K562 (cell line): ENCODE measurements at regions of chr11 and their contacts with region 1.

Region 1: GRCh38 chr11:33052231-33052630 is 12.9 kb downstream of the TCP11L1 start:
- DNase-seq: no peak
- ATAC-seq: no peak
- H3K4me3 ChIP-seq: no peak overlapping the region
- H3K27ac ChIP-seq: no peak overlapping the region
- H3K4me1 ChIP-seq: no peaks in the 10 kb centered on the region
- H3K27me3 ChIP-seq: no peaks in the 10 kb centered on the region
- CTCF ChIP-seq: no peak
- EP300 ChIP-seq: no peak
- POLR2A ChIP-seq: no peak
- RAD21 ChIP-seq: no peak

Region 2: GRCh38 chr11:33039274-33040032 is 12.8 kb before region 1 on chr11 and contains the start of gene TCP11L1:
- CTCF ChIA-PET with region 1: no interaction called
- POLR2A ChIA-PET with region 1: interaction called, 12 read pairs
- in situ Hi-C with region 1: no loop called
- intact Hi-C with region 1: no loop called
- DNase-seq: peak; percentile 66 to 90 (median 87)
- ATAC-seq: peak; percentile 93
- H3K4me3 ChIP-seq: peak within 1 kb of the TSS; percentile 89
- H3K27ac ChIP-seq: peak within 1 kb of the TSS; percentile 99
- H3K4me1 ChIP-seq: peaks cover 0 to 19% of the 10 kb centered on the region in 2 experiments; a peak in 2 of 5 replicates
- H3K27me3 ChIP-seq: no peaks in the 10 kb centered on the region
- CTCF ChIP-seq: no peak
- EP300 ChIP-seq: no peak
- POLR2A ChIP-seq: peak; percentile 69
- RAD21 ChIP-seq: no peak
- polyA plus RNA-seq, gene TCP11L1: 1.6 TPM

Region 3: DNA sequence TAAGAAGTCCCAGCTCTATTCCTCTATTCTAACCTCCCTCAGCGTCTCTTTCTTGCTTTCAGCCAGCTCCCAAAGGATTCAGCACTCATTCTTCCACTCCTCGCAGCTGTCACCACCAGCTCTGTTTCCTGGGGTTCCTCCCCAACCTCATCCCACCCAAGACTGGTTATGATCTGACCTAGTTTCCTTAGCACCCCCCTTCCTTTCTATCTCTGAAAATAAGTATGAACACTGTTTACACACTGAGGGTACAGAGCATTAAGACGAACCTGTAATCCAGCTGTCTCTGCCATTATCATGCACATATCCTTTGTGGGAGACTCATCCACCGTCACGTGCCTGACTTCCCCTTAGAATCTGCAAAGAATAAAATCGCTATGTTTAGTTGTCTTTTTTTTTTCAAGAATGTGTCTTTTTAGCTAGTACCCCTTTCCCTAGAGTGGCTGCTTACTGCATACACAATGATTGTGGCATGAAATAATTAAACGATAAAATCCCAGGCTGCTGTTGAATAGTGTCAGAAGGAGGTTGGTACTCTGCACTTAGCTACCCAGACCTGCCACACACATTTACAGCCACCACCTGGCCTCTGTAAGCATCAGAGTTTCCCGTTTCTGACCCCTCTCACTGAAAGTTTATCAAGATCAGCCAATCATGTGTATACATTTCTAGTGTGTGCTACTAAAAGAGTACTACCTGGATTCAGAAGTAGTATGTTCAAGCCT is 135.9 kb after region 1 on chr11:
- CTCF ChIA-PET with region 1: no interaction called
- POLR2A ChIA-PET with region 1: no interaction called
- in situ Hi-C with region 1: no loop called
- intact Hi-C with region 1: no loop called
- DNase-seq: no peak
- ATAC-seq: peak; percentile 49
- H3K4me3 ChIP-seq: no peak overlapping the region
- H3K27ac ChIP-seq: no peak overlapping the region
- H3K4me1 ChIP-seq: peaks cover under 1 to 4% of the 10 kb centered on the region in 2 experiments; a peak in 1 of 5 replicates
- H3K27me3 ChIP-seq: no peaks in the 10 kb centered on the region
- CTCF ChIP-seq: no peak
- EP300 ChIP-seq: no peak
- POLR2A ChIP-seq: no peak
- RAD21 ChIP-seq: no peak